ENCODE measurements at regions of chr20 and their contacts with region 1.

Region 1: DNA sequence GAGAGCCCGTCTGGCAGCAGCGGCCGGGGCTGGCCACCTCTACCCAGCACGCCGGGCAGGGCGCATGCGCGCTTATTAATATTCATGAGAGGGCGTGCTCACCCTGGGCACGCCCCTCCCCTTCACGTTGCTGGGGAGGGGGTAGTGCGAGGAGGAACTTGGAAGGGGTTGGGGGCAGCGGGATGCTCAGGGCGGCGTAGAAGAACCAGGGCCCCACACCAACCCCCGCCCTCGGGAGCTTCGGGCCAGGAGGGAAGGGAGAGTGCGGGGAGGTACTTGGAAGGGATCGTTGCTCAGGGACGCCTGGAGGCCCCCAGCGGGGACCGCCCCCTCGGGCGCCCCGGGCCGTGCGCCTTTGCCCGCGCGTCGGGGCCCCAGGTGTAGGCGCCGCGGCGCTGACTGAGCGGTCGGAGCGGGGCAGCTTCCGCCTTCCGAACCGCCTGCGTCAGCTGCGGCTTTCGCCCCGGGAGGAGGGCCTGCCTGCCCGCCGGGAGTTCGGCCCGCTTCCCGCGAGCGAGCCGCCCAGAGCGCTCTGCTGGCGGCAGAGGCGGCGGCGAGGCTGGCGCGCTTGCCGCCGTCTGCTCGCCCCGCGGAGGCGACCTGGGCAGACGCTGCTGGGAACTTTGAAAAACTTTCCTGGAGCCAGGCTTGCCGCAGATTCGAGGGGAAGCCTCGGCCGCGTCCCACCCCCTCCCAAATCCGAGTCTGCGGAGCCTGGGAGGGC is at the start of gene JAG1:
- DNase-seq: peak; percentile 94 to 97
- ATAC-seq: peak; percentile 87 to 90 (median 90)
- H3K4me3 ChIP-seq: peak within 1 kb of the TSS; percentile 97
- H3K27ac ChIP-seq: peak within 1 kb of the TSS; percentile 92
- H3K4me1 ChIP-seq: peaks cover under 1% of the 10 kb centered on the region
- H3K27me3 ChIP-seq: no peaks in the 10 kb centered on the region
- CTCF ChIP-seq: no peak
- total RNA-seq, gene JAG1: 10.4 to 35.4 (median 16.0) TPM

Region 2: GRCh38 chr20:10857352-10858070 is 183.4 kb after region 1 on chr20:
- intact Hi-C with region 1: loop called in 1 of 2 experiments (anchors 10 kb)
- DNase-seq: no peak
- ATAC-seq: peak in 2 of 4 donors; percentile 32 to 55
- H3K4me3 ChIP-seq: no peak overlapping the region
- H3K27ac ChIP-seq: no peak overlapping the region
- H3K4me1 ChIP-seq: no peaks in the 10 kb centered on the region
- H3K27me3 ChIP-seq: no peaks in the 10 kb centered on the region
- CTCF ChIP-seq: no peak

Region 3: GRCh38 chr20:10970109-10970508 is 296.0 kb after region 1 on chr20:
- intact Hi-C with region 1: loop called in 1 of 2 experiments (anchors 10 kb)
- DNase-seq: no peak
- ATAC-seq: no peak
- H3K4me3 ChIP-seq: no peak overlapping the region
- H3K27ac ChIP-seq: no peak overlapping the region
- H3K4me1 ChIP-seq: no peaks in the 10 kb centered on the region
- H3K27me3 ChIP-seq: no peaks in the 10 kb centered on the region
- CTCF ChIP-seq: no peak

Region 4: GRCh38 chr20:10982692-10983091 is 308.5 kb after region 1 on chr20:
- intact Hi-C with region 1: loop called (anchors 5 to 10 kb)
- DNase-seq: peak; percentile 70 to 85
- ATAC-seq: peak; percentile 80 to 93 (median 90)
- H3K4me3 ChIP-seq: peak overlapping the region; percentile 51
- H3K27ac ChIP-seq: peak overlapping the region; percentile 90
- H3K4me1 ChIP-seq: peaks cover 51% of the 10 kb centered on the region
- H3K27me3 ChIP-seq: no peaks in the 10 kb centered on the region
- CTCF ChIP-seq: no peak

Region 5: DNA sequence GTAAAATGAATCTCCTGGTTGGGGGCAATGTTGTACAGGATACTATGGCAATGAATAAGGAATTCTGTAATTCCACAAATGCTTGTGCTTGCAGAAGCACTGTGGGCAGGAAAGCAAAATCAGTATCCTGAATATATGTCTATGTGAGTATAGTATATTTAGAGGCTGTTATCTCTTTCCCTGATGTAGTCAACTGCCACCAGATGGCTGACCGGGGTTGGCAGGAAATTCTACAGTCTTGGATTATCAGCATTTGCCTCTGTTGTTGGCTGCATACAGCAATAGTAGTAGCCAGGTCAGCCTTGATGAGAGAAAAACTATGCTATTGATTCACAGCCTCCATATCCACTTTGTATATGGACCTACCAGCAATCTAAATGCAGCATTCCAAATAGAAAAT is 424.7 kb after region 1 on chr20:
- intact Hi-C with region 1: loop called in 1 of 2 experiments (anchors 10 kb)
- DNase-seq: no peak
- ATAC-seq: no peak
- H3K4me3 ChIP-seq: no peak overlapping the region
- H3K27ac ChIP-seq: no peak overlapping the region
- H3K4me1 ChIP-seq: no peaks in the 10 kb centered on the region
- H3K27me3 ChIP-seq: no peaks in the 10 kb centered on the region
- CTCF ChIP-seq: no peak

Region 6: DNA sequence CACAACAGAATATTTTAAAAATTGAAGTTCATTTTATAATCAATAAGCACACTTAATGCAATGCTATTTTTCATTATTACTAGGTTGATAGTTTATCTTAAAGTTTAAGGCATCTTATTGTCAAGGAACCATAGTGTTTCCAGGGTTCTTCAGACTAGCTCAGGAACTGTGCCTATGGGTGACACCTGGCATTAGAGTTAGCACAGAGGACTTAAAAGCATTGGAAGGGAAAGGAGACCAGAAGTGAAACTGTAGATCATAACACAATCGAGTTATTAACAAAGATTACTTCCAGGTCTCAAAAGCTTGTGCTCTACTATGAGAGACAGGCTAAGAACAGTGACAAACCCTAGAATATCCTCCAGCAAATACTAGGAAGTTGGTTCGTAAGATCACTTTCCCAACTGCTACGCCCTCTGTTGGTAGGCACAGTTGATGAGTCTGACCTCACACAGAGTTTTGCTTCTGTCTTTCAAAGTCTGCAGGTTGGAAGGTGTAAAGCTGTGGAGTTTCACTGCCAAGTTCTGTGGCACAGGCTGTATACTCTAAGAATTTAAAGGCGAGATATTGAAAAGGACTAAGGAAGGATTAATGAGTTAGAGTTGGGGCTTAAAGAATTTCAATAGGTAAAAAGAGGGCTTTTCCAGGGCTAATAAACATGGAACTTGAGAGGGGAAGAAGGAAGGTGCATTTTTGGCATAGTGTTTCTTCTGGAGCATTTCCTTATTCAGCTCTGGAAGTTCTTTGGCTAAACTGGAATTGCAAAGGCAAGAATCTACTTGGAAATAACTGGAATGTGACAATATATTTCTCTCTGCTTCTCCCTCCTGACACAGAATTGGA is 531.0 kb after region 1 on chr20:
- intact Hi-C with region 1: loop called (anchors 5 to 10 kb)
- DNase-seq: peak; percentile 30 to 52
- ATAC-seq: peak; percentile 84 to 96 (median 91)
- H3K4me3 ChIP-seq: no peak overlapping the region
- H3K27ac ChIP-seq: no peak overlapping the region
- H3K4me1 ChIP-seq: no peaks in the 10 kb centered on the region
- H3K27me3 ChIP-seq: no peaks in the 10 kb centered on the region
- CTCF ChIP-seq: peak; percentile 76

Region 7: GRCh38 chr20:11544029-11544678 is 870.0 kb after region 1 on chr20:
- intact Hi-C with region 1: loop called in 1 of 2 experiments (anchors 10 kb)
- DNase-seq: no peak
- ATAC-seq: peak; percentile 58 to 80 (median 62)
- H3K4me3 ChIP-seq: no peak overlapping the region
- H3K27ac ChIP-seq: no peak overlapping the region
- H3K4me1 ChIP-seq: no peaks in the 10 kb centered on the region
- H3K27me3 ChIP-seq: no peaks in the 10 kb centered on the region
- CTCF ChIP-seq: peak; percentile 70